Posterior vena cava (tissue), 2 donors: ENCODE measurements at regions of chr7 and their contacts with region 1.

Region 1: DNA sequence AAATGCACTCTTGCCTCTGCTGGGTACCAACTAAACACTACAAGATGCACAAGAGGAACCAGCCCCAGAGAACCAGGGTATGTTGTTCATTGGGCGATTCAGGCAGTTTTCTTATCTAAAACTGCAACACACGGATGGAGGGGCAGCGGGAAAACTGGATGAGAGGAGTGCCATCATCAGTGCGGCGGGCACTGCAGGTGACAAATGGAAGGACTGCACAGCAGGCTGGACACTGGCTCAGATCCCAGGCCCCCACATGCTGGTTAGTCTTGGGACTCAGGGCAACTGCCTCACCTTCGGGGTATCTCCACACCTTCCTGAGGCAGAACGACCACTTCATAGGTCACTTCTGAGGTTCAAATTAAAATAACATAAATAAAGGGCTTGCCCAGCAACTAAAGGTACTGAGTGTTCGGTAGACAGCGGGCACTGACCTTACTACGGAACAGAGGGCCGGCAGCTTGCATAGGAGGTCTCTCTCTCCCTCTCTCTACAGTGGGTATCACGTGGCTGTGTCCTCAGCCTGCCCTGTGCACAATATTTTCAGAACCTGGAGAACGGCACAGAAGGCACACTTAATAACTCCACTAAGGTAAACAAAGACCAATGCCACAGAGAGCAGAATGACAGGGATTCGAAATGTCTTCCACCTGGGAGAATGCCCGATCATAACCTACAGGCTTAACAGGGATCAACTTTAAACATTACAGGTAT is 72.1 kb downstream of the GRB10 start:
- DNase-seq: no peak

Region 2: DNA sequence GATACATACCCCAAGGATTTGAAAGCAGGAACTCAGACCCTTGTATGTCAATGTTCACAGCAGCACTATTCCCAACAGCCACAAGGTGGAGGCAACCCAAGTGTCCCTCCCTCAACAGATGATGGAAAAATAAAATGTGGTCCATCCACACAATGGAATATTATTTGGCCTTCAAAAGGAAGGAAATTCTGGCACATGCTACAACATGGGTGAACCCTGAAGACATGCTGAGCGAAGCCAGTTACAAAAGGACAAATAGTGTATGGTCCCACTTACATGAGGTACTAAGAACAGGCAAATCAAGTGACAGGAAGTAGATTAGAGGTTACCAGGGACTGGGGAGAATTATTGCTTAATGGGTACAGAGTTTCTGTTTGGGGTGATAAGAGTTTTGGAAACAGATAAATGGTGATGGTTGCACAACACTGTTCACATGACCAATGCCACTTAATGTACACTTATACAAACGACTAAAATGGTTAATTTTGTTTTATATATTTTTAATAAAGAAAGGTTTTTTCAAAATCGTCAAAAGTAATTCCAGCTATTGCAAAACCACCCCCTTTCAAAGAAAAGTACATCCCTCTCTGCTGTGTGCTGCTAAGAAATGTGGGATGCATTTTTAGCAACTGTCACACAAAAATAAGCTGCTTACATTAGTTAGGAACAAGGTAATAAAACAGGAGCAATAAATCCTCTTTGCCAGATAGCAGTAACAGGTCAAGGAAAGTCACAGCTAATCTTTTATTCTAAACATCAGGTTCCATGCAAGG is 13.6 kb before region 1 on chr7:
- intact Hi-C with region 1: loop called in 1 of 2 experiments (anchors 1 kb)
- DNase-seq: no peak

Region 3: GRCh38 chr7:52555805-52556204 is 1845.2 kb after region 1 on chr7:
- intact Hi-C with region 1: no loop called
- DNase-seq: no peak